GM18951 (cell line): ENCODE measurements at regions of chr21 and their contacts with region 1.

Region 1: GRCh38 chr21:36927719-36928117 is 38.8 kb downstream of the HLCS start:
- POLR2A ChIP-seq: no peak

Region 2: DNA sequence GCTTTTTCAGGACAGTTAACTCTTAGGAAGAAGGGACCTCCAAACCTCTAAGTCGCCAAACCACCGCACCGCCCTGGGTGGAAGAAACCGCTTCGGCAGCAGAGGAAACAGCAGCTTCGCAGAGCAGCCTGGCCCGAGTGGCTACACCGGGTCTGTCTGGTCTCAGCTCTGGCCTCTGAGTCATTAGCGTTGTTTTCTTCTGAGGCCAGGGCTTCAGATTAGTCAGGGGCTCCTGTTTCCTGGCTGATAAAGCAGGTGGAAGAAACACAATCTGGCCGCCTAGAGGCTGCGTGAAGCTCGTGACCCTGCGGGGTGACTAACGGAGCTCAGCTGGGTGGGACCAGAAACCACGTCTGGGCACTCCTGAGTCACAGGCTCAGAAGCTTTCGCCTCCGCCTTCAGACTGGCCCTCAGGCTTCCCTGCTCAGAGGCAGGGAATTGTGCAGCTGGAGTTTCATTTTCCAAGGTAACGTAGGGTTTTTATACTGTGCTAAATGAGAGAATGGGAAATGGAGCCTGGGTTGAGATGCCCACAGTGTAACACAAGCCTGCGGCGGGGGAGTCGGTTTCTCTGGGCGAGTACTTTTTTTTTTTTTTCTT is 497.7 kb before region 1 on chr21:
- in situ Hi-C with region 1: loop called (anchors 10 kb)
- POLR2A ChIP-seq: no peak

Region 3: GRCh38 chr21:36630485-36631206 is 297.1 kb before region 1 on chr21:
- in situ Hi-C with region 1: loop called (anchors 25 kb)
- POLR2A ChIP-seq: no peak

Region 4: DNA sequence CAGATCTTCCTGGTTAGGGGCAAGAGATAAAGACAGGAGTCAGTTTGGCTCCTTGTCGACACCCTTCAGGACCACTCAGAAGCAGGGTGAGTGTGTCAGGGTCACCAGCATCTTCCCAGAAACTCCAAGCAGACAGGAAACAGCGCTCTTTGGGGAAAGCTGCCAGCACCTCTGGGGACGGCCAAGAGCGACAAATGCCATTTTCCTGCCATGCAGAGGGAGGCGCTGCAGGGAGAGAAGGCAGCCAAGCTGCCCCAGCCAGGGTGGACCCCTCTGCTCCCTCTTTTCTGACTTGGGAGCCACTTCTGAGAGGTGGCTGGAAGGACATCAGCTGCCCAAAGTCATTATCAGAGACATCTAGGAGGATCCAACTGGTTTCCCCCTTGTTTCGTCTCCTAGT is 199.9 kb before region 1 on chr21:
- in situ Hi-C with region 1: no loop called
- POLR2A ChIP-seq: no peak

Region 5: DNA sequence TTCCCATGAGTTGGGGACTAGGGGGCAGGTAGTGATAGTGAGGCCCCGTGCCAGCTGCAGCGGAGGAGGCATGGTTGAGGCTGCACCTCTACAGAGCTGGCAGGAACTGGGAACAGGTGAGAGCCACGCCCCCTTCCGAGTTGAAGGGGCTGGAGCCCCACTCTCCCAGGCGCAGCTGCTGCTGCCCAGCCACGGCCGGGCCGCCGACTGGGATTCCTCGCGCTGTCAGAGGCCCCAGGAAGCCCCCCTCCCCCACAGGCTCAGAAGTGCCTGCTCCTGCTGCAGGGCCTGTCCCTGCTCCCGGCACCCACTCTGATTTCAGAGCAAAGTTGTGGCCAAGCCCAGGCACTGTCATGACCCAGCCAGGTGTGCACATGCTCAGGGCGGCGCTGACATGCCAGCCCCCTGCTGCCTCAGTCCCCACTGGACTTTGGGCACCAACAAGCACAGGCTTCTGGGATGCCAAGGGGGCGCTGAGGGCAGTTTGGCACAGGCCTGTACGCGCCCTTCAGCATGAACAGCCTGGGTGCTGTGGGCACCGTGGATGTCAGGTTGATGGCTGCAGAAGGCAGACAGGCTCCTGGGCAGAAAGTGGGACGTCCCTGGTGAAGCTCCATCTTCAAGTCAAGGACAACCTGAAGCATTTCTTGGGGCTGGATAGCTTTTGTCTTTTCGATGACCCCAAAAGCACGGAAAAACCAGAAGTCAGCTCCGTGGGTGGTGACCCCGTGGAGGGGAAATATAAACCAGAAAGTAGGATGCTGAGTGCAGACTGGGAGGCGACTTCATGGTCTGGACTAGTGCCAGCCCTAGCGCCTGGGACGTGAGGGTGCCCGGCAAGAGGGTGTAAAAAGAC is 107.3 kb before region 1 on chr21:
- in situ Hi-C with region 1: no loop called
- POLR2A ChIP-seq: no peak

Region 6: DNA sequence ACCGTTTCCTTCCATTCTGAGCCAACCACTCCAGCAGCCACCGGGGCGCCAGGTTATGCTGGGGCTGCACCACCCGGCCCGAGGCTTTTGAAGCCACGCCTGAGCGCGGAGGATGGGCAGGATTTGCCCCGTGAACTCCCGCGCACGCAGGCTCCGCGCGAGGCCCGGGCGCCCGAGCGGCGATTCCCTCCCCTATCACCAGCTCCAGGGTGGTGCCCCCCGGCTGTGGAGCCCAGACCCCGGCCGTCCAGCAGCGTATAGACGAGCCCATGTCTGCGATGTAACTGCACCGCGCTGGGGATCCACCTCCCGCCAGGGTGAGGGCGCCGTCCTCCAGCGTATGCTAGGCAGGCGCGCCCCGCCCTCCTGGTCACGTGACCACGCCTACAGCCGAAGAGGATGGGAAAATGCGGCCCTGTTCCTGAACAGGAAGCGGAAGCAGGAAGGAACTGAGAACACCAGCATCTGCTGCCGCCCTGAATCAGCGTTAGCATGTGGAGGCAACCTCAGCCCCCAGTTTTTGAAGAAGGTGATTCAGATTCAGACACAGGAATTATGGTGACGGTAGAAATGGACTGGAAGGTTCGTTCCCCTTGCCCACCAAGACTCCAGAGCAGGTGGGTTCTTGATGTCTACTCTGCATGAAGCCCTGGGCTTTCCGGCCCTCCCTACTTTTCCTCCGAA is 293.4 kb after region 1 on chr21:
- in situ Hi-C with region 1: no loop called
- POLR2A ChIP-seq: peak; percentile 90